ENCODE measurements at regions of chr2 and their contacts with region 1.

Region 1: DNA sequence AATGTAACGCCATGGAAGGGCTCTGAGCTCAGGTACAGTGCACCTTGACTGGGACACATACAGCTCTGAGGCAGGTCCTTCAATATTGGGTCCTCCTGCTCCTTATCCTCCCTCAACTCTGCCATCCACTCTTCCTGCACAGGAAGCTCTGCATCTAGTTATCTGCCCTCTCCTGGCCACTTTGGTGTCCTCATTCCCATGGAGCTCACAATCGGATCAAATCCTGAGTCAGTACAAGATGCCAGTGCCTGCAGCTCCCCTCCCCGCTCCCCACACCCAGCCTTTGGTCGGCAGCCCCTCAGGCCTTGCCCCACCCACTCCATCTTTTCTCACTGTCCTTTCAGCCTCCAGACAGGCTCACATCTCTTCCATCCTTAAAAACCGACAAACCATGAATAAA is 58.0 kb downstream of the LRRFIP1 start:
- DNase-seq: no peak
- H3K27ac ChIP-seq: no peak overlapping the region
- CTCF ChIP-seq: no peak

Region 2: DNA sequence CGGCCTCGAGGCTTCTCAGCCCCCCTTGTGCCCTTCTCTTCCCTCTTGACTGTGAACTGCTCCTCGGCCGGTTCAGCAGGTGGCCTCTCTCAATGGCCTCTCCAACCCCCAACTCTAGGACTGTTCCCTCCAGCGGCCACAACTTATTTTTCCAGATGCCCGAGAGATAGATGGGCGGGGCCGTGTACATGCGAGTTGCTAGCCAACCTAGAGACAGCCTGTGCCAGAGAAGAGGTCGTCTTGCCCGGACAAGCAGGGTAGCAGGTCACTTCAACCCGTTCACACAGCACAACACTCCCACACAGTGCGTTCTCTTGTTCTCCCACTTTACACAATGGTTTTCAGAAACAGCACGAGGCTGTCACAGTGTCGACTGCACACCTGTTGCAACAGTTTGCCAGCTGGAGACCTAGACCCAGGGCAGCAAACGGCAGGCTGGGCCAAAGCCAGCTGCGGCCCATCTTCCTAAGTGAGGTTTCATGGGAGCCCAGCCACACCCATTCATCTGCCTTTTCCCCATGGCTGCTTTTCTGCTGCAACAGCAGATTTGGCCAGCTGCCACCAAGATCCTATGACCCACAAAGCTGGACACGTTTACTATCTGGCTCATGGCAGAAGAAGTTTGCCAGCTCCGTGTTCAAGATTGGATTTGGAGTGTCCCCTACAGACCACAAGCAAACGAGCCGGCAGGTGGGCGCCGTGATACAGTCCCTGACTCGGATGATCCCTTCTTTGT is 126.3 kb before region 1 on chr2:
- CTCF ChIA-PET with region 1: no interaction called
- POLR2A ChIA-PET with region 1: no interaction called
- DNase-seq: peak; percentile 62
- H3K27ac ChIP-seq: peak overlapping the region; percentile 92
- CTCF ChIP-seq: no peak

Region 3: GRCh38 chr2:237674731-237675276 is 10.6 kb before region 1 on chr2:
- CTCF ChIA-PET with region 1: interaction called, 24 read pairs
- POLR2A ChIA-PET with region 1: no interaction called
- DNase-seq: peak; percentile 75
- H3K27ac ChIP-seq: peak overlapping the region; percentile 85
- CTCF ChIP-seq: no peak

Region 4: GRCh38 chr2:237923481-237924163 is 238.2 kb after region 1 on chr2:
- CTCF ChIA-PET with region 1: no interaction called
- POLR2A ChIA-PET with region 1: no interaction called
- DNase-seq: peak; percentile 80
- H3K27ac ChIP-seq: peak overlapping the region; percentile 78
- CTCF ChIP-seq: peak; percentile 94

Measured in RWPE1 (cell line).